ENCODE measurements at regions of chr12 and their contacts with region 1.

Region 1: DNA sequence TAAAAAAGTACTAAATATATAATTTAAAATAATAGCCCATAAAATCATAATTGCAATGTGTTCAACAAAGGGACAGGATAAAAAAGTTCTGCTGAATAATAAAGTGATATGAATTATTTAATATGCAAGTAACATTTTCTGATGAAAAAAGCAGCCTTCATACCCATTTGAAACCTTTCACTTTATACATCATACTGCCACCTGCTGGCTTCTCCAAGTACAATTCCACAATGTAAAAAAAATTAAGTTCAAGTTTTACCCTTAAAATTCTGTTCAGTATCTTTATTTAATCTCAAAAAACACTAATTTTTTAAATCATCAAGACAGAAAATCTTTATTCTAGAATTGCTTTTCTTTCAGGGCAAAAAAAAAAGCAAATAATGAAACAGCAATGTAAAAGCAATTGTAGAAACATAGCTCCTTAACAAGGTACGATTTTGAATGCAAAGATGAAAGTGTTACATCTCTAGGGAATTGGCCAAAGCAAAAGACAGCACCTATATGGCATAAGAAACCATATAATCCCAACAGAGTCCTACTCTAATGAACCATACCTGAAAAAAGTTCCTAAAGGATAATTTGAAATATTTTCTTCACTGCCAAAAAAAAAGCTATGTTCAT is 15.0 kb downstream of the MDM1 start:
- DNase-seq: peak in 4 of 5 donors; percentile 48 to 58 (median 54)
- H3K4me3 ChIP-seq: no peak overlapping the region
- H3K4me3 Mint-ChIP-seq: no peak overlapping the region
- H3K27ac ChIP-seq: no peak overlapping the region
- H3K27ac Mint-ChIP-seq: no peak overlapping the region
- H3K4me1 ChIP-seq: no peaks in the 10 kb centered on the region
- H3K4me1 Mint-ChIP-seq: peaks cover 0 to 2% (median 0%) of the 10 kb centered on the region in 4 donors
- H3K27me3 ChIP-seq: no peaks in the 10 kb centered on the region
- H3K27me3 Mint-ChIP-seq: no peaks in the 10 kb centered on the region

Region 2: GRCh38 chr12:68040450-68041075 is 276.6 kb before region 1 on chr12:
- CTCF ChIA-PET with region 1: interaction called, 29 read pairs
- POLR2A ChIA-PET with region 1: no interaction called
- intact Hi-C with region 1: loop called (anchors 1 kb)
- DNase-seq: peak; percentile 60 to 69 (median 65)
- H3K4me3 ChIP-seq: no peak overlapping the region
- H3K4me3 Mint-ChIP-seq: peak overlapping the region in 4 of 8 donors; percentile 2 to 29 (median 16)
- H3K27ac ChIP-seq: no peak overlapping the region
- H3K27ac Mint-ChIP-seq: peak overlapping the region in 5 of 7 donors; percentile 2 to 82 (median 34)
- H3K4me1 ChIP-seq: peaks cover 12% of the 10 kb centered on the region
- H3K4me1 Mint-ChIP-seq: peaks cover 12 to 19% (median 16%) of the 10 kb centered on the region in 4 donors
- H3K27me3 ChIP-seq: no peaks in the 10 kb centered on the region
- H3K27me3 Mint-ChIP-seq: no peaks in the 10 kb centered on the region

Region 3: GRCh38 chr12:68113644-68114043 is 203.5 kb before region 1 on chr12:
- CTCF ChIA-PET with region 1: interaction called, 3 read pairs
- POLR2A ChIA-PET with region 1: interaction called, 3 read pairs
- intact Hi-C with region 1: loop called (anchors 1 kb)
- DNase-seq: peak in 4 of 5 donors; percentile 20 to 46 (median 34)
- H3K4me3 ChIP-seq: no peak overlapping the region
- H3K4me3 Mint-ChIP-seq: no peak overlapping the region
- H3K27ac ChIP-seq: no peak overlapping the region
- H3K27ac Mint-ChIP-seq: no peak overlapping the region
- H3K4me1 ChIP-seq: peaks cover 18% of the 10 kb centered on the region
- H3K4me1 Mint-ChIP-seq: peaks cover 14 to 27% (median 20%) of the 10 kb centered on the region in 4 donors
- H3K27me3 ChIP-seq: no peaks in the 10 kb centered on the region
- H3K27me3 Mint-ChIP-seq: peaks cover 0 to 1% of the 10 kb centered on the region in 2 donors

Region 4: GRCh38 chr12:68331869-68332727 is 14.9 kb after region 1 on chr12 and contains the start of gene MDM1:
- CTCF ChIA-PET with region 1: interaction called, 15 read pairs
- POLR2A ChIA-PET with region 1: interaction called, 3 read pairs
- intact Hi-C with region 1: no loop called
- DNase-seq: peak; percentile 95 to 98 (median 96)
- H3K4me3 ChIP-seq: peak within 1 kb of the TSS; percentile 60 to 77
- H3K4me3 Mint-ChIP-seq: peak within 1 kb of the TSS; percentile 88 to 93 (median 90)
- H3K27ac ChIP-seq: peak within 1 kb of the TSS; percentile 58
- H3K27ac Mint-ChIP-seq: peak within 1 kb of the TSS; percentile 64 to 95 (median 91)
- H3K4me1 ChIP-seq: peaks cover 30% of the 10 kb centered on the region
- H3K4me1 Mint-ChIP-seq: peaks cover 32 to 49% (median 42%) of the 10 kb centered on the region in 4 donors
- H3K27me3 ChIP-seq: no peaks in the 10 kb centered on the region
- H3K27me3 Mint-ChIP-seq: peaks cover 0 to 2% of the 10 kb centered on the region in 2 donors
- total RNA-seq, gene MDM1: 27.0 to 29.4 TPM